Activated CD4-positive, alpha-beta memory T cell treated with anti-CD3 and anti-CD28 coated beads for 36 hours (primary cell): ENCODE measurements at regions of chr13 and their contacts with region 1.

Region 1: GRCh38 chr13:70960841-70961443 is 852.7 kb upstream of the KLHL1 start:
- DNase-seq: no peak
- H3K4me3 Mint-ChIP-seq: no peak overlapping the region
- H3K27ac Mint-ChIP-seq: no peak overlapping the region
- H3K4me1 Mint-ChIP-seq: no peaks in the 10 kb centered on the region
- H3K27me3 Mint-ChIP-seq: no peaks in the 10 kb centered on the region

Region 2: GRCh38 chr13:70623239-70623638 is 337.7 kb before region 1 on chr13:
- CTCF ChIA-PET with region 1: no interaction called
- POLR2A ChIA-PET with region 1: no interaction called
- intact Hi-C with region 1: loop called (anchors 5 kb)
- DNase-seq: no peak
- H3K4me3 Mint-ChIP-seq: no peak overlapping the region
- H3K27ac Mint-ChIP-seq: no peak overlapping the region
- H3K4me1 Mint-ChIP-seq: no peaks in the 10 kb centered on the region
- H3K27me3 Mint-ChIP-seq: no peaks in the 10 kb centered on the region

Region 3: DNA sequence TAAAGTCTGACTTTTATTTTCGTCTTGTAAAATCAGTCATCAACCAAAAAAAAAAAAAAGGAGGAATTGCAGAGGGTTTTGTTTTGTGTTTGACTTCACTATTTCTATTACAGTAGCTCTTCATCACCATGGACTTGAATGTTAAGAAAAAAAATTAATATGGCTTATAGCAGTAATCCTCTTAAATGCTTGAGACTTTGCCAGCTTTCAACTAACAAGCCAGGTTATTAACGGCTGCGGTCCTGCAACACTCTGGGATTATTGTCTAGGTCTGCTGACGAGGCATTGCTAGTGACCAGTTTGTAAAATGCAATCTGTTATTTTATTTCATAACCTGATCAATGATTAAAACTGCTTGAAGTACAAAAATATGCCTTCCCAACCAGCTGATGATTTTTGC is 205.5 kb before region 1 on chr13:
- CTCF ChIA-PET with region 1: no interaction called
- POLR2A ChIA-PET with region 1: no interaction called
- intact Hi-C with region 1: no loop called
- DNase-seq: no peak
- H3K4me3 Mint-ChIP-seq: no peak overlapping the region
- H3K27ac Mint-ChIP-seq: no peak overlapping the region
- H3K4me1 Mint-ChIP-seq: no peaks in the 10 kb centered on the region
- H3K27me3 Mint-ChIP-seq: no peaks in the 10 kb centered on the region

Region 4: DNA sequence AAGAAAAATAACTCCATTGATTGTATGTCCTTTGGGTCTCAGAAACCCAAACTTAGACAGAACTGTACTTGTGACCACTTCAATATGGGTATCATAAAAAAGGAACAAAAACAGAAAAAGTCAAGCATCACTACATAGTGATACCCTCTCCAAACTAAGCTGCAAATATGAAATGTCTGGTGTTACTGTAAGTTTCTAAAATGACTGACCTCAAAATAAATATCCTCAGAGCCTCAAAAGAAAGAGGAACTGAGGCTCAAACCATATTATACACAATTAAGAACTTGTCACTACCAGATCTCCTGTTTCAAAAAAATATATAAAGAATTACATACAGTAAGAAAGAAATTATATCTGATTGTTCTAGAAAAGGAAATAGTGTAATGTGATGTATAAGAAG is 64.8 kb before region 1 on chr13:
- CTCF ChIA-PET with region 1: no interaction called
- POLR2A ChIA-PET with region 1: no interaction called
- intact Hi-C with region 1: no loop called
- DNase-seq: no peak
- H3K4me3 Mint-ChIP-seq: no peak overlapping the region
- H3K27ac Mint-ChIP-seq: no peak overlapping the region
- H3K4me1 Mint-ChIP-seq: no peaks in the 10 kb centered on the region
- H3K27me3 Mint-ChIP-seq: no peaks in the 10 kb centered on the region